Mammary epithelial cell (primary cell): ENCODE measurements at regions of chr9 and their contacts with region 1.

Region 1: DNA sequence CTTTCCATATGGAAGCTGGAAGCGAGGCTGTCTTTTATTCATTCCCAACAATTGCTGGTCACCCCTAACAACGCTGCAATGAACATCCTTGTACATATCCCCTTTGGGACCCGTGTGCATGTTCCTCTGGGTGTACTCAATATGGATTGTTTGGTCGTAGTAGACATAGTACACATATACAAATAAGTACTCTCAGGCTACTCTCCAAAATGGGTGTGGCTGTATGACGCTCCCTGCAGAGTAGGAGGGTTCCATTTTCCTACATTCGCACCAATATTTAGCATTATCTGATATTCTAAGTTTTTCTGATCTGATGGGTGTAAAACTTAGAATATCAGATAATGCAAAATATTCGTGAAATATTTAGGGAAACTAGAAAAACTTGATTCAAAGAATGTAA is 23.2 kb upstream of the NAA35 start:
- DNase-seq: no peak
- H3K4me3 ChIP-seq: no peak overlapping the region
- H3K27ac ChIP-seq: no peak overlapping the region
- H3K4me1 ChIP-seq: no peaks in the 10 kb centered on the region
- H3K27me3 ChIP-seq: no peaks in the 10 kb centered on the region
- CTCF ChIP-seq: no peak

Region 2: DNA sequence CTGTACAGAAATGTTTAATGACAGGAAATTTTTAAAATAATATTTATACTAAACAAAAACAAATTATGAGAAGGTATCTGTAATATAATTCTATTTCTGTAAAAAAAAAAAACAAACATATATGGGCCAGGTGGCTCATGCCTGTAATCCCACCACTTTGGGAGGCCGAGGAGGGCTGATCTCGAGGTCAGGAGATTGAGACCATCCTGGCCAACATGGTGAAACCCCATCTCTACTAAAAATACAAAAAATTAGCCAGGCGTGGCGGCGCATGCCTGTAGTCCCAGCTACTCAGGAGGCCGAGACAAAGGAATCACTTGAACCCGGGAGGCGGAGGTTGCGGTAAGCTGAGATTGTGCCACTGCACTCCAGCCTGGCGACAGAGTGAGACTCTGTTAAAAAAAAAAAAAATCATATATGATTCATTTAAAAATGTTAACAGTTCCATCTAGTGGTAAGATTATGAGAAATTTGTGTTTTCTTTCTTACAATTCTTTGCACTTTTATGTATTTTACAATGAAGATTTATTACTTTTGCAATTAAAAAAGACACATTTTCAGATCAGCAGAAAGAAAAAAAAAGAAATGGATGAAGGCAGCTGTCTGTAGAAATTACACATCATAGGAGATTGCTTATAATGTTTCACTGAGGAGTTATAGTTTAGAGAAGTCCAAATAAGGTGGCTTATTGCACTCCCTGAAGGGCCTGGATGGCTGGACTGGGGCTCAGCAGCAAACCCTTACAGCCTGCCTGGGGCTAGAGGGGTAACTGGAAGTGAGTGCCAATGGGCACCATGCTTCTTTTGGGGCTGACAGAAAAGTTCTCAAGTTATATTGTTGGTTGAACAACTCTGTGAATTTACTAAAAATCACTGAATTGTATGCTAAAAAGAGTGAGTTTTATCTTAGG is 321.4 kb after region 1 on chr9:
- CTCF ChIA-PET with region 1: interaction called, 32 read pairs
- dilution Hi-C with region 1: no loop called
- in situ Hi-C with region 1: no loop called
- intact Hi-C with region 1: no loop called
- DNase-seq: no peak
- H3K4me3 ChIP-seq: no peak overlapping the region
- H3K27ac ChIP-seq: no peak overlapping the region
- H3K4me1 ChIP-seq: no peaks in the 10 kb centered on the region
- H3K27me3 ChIP-seq: no peaks in the 10 kb centered on the region
- CTCF ChIP-seq: peak in 1 of 2 donors; percentile 1